ENCODE measurements at regions of chr3 and their contacts with region 1.

Region 1: GRCh38 chr3:87167628-87168456 is 59.3 kb upstream of the CHMP2B start:
- DNase-seq: no peak
- H3K4me3 ChIP-seq: no peak overlapping the region
- H3K27ac ChIP-seq: no peak overlapping the region
- H3K4me1 ChIP-seq: no peaks in the 10 kb centered on the region; a peak in 1 of 7 replicates
- H3K27me3 ChIP-seq: no peaks in the 10 kb centered on the region
- CTCF ChIP-seq: peak in 2 of 3 experiments; percentile 54 to 65; a peak in 3 of 4 replicates
- EP300 ChIP-seq: no peak
- POLR2A ChIP-seq: no peak
- RAD21 ChIP-seq: peak; percentile 61 to 75

Region 2: DNA sequence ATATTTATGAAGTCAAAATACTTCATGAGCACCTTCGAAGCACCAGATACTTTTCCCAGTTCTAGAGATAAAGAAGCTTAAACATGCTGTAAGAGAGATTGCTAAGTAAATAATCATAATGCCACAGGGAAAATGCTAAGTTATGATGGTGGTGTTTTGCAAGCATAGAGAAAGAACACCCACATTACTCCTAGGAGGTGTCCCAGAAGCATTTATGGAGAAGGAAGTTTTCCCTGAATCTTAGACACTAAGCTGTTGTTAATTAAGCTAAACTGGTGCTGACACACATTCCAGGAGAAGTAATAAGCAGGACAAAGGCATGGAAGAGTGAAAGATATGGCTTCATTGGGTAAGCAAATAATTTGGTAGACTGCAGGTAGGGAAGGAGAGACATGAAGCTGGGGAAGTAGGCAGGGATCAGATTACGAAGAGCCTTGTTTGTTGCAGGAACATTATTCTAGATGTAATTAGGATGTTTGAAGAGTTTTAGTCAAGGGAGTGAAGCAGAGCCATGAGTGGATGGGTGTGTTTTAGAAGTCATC is 18.8 kb after region 1 on chr3:
- CTCF ChIA-PET with region 1: interaction called, 11 read pairs
- POLR2A ChIA-PET with region 1: no interaction called
- DNase-seq: no peak
- H3K4me3 ChIP-seq: no peak overlapping the region
- H3K27ac ChIP-seq: no peak overlapping the region
- H3K4me1 ChIP-seq: peaks cover 0 to 4% (median 0%) of the 10 kb centered on the region in 4 experiments; a peak in 2 of 7 replicates
- H3K27me3 ChIP-seq: no peaks in the 10 kb centered on the region
- CTCF ChIP-seq: no peak
- EP300 ChIP-seq: no peak
- POLR2A ChIP-seq: no peak
- RAD21 ChIP-seq: no peak

Region 3: DNA sequence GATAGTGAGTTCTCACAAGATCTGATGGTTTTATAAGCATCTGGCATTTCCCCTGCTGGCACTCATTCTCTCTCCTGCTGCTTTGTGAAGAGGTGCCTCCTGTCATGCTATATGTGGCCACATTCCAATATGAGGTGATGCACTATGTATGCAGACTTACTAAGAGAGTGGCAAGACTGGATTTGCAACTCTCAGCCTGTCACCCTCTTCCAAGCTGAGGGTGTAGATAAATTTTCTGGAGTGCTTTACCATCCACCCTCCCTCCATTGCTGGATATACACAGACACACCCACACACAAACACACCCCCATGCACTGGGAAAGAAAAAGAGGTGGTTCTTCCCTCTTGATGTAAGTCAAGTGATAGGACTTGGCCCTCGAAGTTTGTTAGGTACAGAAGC is 29.0 kb after region 1 on chr3:
- CTCF ChIA-PET with region 1: no interaction called
- POLR2A ChIA-PET with region 1: no interaction called
- DNase-seq: no peak
- H3K4me3 ChIP-seq: no peak overlapping the region
- H3K27ac ChIP-seq: no peak overlapping the region
- H3K4me1 ChIP-seq: no peaks in the 10 kb centered on the region
- H3K27me3 ChIP-seq: no peaks in the 10 kb centered on the region
- CTCF ChIP-seq: no peak
- EP300 ChIP-seq: no peak
- POLR2A ChIP-seq: no peak
- RAD21 ChIP-seq: no peak

Region 4: GRCh38 chr3:87380761-87381160 is 212.9 kb after region 1 on chr3:
- CTCF ChIA-PET with region 1: no interaction called
- POLR2A ChIA-PET with region 1: no interaction called
- DNase-seq: no peak
- H3K4me3 ChIP-seq: no peak overlapping the region
- H3K27ac ChIP-seq: no peak overlapping the region
- H3K4me1 ChIP-seq: no peaks in the 10 kb centered on the region
- H3K27me3 ChIP-seq: no peaks in the 10 kb centered on the region
- CTCF ChIP-seq: no peak
- EP300 ChIP-seq: no peak
- POLR2A ChIP-seq: no peak
- RAD21 ChIP-seq: no peak

Measured in H1 (cell line).